Activated CD8-positive, alpha-beta T cell treated with anti-CD3 and anti-CD28 coated beads for 36 hours (primary cell): ENCODE measurements at regions of chr1 and their contacts with region 1.

Region 1: DNA sequence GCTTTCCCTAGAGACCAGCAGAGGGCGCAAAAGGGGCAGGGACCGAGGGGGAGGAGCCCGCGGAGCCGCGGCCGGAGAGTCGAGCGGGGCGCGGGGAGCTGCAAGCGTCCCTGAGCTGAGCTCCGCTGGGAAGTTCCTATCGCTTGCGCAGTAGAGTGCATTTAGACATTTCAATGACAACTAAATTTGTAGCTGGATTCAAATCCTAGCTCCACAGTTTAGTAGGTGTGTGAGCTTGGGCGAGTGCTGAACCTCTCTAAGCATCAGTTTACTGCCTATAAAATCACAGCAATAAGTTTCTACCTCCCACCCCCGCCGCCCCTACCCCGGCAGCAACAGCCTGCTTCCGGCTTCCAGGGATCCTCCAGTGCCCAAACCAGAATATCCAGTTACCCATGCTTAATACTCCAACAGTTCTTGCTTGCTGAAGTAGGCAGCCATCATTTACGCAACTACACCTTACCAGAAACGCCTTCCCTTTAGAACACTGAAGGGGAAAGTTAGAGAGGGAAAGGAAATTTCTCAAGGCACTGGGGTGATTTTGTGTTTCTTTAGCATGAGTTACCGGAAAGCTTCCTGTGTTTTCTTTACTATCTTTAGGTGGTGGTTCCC is 9.1 kb downstream of the TLR5 start:
- DNase-seq: peak; percentile 84
- ATAC-seq: peak; percentile 94
- H3K4me3 Mint-ChIP-seq: peak overlapping the region; percentile 14
- H3K27ac Mint-ChIP-seq: no peak overlapping the region
- H3K4me1 Mint-ChIP-seq: peaks cover 14% of the 10 kb centered on the region
- H3K27me3 Mint-ChIP-seq: peaks cover 13% of the 10 kb centered on the region
- CTCF ChIP-seq: peak; percentile 31

Region 2: GRCh38 chr1:223062177-223062576 is 71.8 kb before region 1 on chr1:
- CTCF ChIA-PET with region 1: interaction called, 3 read pairs
- POLR2A ChIA-PET with region 1: no interaction called
- intact Hi-C with region 1: loop called (anchors 10 kb)
- DNase-seq: no peak
- ATAC-seq: no peak
- H3K4me3 Mint-ChIP-seq: no peak overlapping the region
- H3K27ac Mint-ChIP-seq: no peak overlapping the region
- H3K4me1 Mint-ChIP-seq: no peaks in the 10 kb centered on the region
- H3K27me3 Mint-ChIP-seq: peaks cover 2% of the 10 kb centered on the region
- CTCF ChIP-seq: no peak

Region 3: GRCh38 chr1:223123011-223123610 is 10.8 kb before region 1 on chr1:
- CTCF ChIA-PET with region 1: interaction called, 111 read pairs
- POLR2A ChIA-PET with region 1: interaction called, 3 read pairs
- intact Hi-C with region 1: no loop called
- DNase-seq: no peak
- ATAC-seq: no peak
- H3K4me3 Mint-ChIP-seq: no peak overlapping the region
- H3K27ac Mint-ChIP-seq: no peak overlapping the region
- H3K4me1 Mint-ChIP-seq: peaks cover 7% of the 10 kb centered on the region
- H3K27me3 Mint-ChIP-seq: no peaks in the 10 kb centered on the region
- CTCF ChIP-seq: no peak

Region 4: GRCh38 chr1:223180731-223181321 is 46.9 kb after region 1 on chr1:
- CTCF ChIA-PET with region 1: interaction called, 14 read pairs
- POLR2A ChIA-PET with region 1: no interaction called
- intact Hi-C with region 1: no loop called
- DNase-seq: no peak
- ATAC-seq: no peak
- H3K4me3 Mint-ChIP-seq: no peak overlapping the region
- H3K27ac Mint-ChIP-seq: no peak overlapping the region
- H3K4me1 Mint-ChIP-seq: peaks cover 20% of the 10 kb centered on the region
- H3K27me3 Mint-ChIP-seq: peaks cover 3% of the 10 kb centered on the region
- CTCF ChIP-seq: no peak

Region 5: GRCh38 chr1:223233410-223234169 is 99.7 kb after region 1 on chr1:
- CTCF ChIA-PET with region 1: interaction called, 16 read pairs
- POLR2A ChIA-PET with region 1: interaction called, 3 read pairs
- intact Hi-C with region 1: no loop called
- DNase-seq: peak; percentile 16
- ATAC-seq: peak; percentile 38
- H3K4me3 Mint-ChIP-seq: no peak overlapping the region
- H3K27ac Mint-ChIP-seq: no peak overlapping the region
- H3K4me1 Mint-ChIP-seq: peaks cover 56% of the 10 kb centered on the region
- H3K27me3 Mint-ChIP-seq: no peaks in the 10 kb centered on the region
- CTCF ChIP-seq: no peak

Region 6: DNA sequence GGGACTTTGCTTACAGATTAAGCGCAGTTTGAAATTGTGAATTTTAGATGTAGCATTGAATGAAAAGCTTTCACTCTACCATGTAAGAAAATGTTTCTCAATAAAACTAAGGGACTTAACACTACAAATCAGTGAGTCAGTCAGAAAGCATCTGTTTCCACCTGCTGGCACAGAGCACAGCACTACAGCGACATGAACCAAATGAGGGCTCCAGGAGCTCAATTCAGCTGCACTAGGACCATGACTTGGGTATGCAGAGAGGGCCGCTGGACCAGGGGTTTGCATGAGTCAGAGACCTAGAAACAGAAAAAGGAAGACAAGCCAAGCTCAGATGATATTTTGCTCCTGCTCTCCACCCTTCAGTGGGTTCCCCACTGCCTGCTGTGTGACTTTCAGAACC is 224.9 kb after region 1 on chr1:
- CTCF ChIA-PET with region 1: interaction called, 20 read pairs
- POLR2A ChIA-PET with region 1: no interaction called
- intact Hi-C with region 1: no loop called
- DNase-seq: no peak
- ATAC-seq: no peak
- H3K4me3 Mint-ChIP-seq: no peak overlapping the region
- H3K27ac Mint-ChIP-seq: no peak overlapping the region
- H3K4me1 Mint-ChIP-seq: peaks cover 9% of the 10 kb centered on the region
- H3K27me3 Mint-ChIP-seq: peaks cover 13% of the 10 kb centered on the region
- CTCF ChIP-seq: no peak

Region 7: DNA sequence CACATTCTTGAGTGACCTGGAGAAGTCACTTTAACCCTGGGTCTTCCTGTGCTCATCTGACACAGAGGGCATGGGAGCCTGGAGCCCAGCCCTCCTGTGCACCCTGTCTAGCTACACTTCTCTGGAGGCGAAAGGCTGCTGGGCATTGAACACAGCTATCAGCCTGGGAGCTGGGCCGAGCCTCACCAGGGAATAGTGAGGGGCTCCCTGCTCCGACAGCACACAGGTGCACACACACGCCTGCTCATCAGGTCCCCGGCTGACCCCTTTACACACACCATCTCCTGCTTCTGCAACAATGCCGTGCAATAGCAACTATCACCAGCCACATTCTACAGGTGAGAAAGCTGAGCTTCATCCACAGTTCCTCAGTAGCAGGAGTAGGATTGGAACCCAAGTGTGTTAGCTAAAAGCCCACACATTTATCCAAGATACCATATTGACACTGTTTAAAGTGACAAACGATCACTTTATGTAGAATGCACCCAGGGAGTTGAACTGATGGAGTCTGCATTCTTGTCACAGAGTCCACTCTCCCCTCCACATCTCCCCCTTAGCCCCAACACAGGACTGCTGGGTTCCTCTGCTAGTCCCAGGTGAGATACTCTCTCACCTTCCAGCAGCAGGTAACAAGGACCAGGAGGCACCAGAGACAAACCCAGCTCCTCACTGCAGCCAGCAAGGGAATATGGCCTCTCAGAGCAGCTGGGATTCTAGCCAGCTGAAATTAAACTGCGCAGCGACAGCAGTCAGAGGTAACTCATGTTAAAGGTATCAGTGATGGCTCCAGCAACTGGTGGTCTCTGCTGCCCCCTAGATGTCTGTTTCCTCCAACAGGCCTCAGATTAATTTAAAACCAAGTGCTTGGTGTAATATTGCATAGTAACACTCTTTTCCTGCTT is 549.9 kb after region 1 on chr1:
- CTCF ChIA-PET with region 1: interaction called, 26 read pairs
- POLR2A ChIA-PET with region 1: no interaction called
- intact Hi-C with region 1: loop called (anchors 5 kb)
- DNase-seq: peak; percentile 81
- ATAC-seq: peak; percentile 77
- H3K4me3 Mint-ChIP-seq: no peak overlapping the region
- H3K27ac Mint-ChIP-seq: no peak overlapping the region
- H3K4me1 Mint-ChIP-seq: no peaks in the 10 kb centered on the region
- H3K27me3 Mint-ChIP-seq: peaks cover 3% of the 10 kb centered on the region
- CTCF ChIP-seq: peak; percentile 68